Caco-2 (cell line): ENCODE measurements at regions of chr22 and their contacts with region 1.

Region 1: GRCh38 chr22:22877523-22878210 is 9.9 kb upstream of the IGLL5 start:
- DNase-seq: peak; percentile 57 to 77
- H3K4me3 ChIP-seq: no peak overlapping the region
- H3K4me3 Mint-ChIP-seq: no peak overlapping the region
- H3K27ac Mint-ChIP-seq: no peak overlapping the region
- H3K4me1 ChIP-seq: no peaks in the 10 kb centered on the region
- H3K4me1 Mint-ChIP-seq: no peaks in the 10 kb centered on the region
- H3K27me3 ChIP-seq: no peaks in the 10 kb centered on the region
- H3K27me3 Mint-ChIP-seq: no peaks in the 10 kb centered on the region
- CTCF ChIP-seq: peak; percentile 81 to 90

Region 2: DNA sequence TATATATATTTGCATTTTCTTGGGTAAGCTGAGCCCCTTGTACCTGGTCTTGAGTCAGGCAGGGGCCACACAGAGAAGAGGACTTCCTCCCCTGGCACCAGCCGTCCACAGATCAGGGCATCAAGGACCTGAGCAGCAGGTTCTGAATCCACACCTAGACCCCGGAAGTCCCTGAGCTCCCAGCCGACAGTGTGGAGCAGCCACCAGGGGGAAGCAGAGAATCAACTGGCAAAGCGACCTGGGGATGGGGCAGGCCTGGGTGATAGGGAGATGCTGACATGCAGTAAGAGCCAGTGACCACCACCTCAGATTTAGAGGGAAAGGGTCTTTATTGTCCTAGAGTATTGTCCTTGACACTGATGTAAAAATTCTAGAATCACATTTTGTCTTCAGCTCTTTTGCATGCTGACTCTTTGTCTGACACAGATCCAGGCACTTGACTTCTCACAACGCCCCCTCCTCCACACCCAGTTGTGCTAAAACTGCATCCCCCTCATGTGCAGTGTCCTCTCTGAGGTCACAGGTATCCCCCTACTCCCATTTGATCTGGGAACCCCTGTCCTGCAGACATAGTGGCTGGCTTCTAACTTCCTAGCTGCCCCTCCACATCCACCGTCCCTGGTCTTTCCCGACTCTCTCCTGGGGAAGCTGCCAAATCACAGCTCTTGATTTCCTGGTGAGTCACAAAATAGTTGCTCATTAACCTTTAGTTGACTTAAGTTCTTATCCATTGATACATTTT is 124.0 kb before region 1 on chr22:
- CTCF ChIA-PET with region 1: interaction called, 11 read pairs
- POLR2A ChIA-PET with region 1: no interaction called
- intact Hi-C with region 1: no loop called
- DNase-seq: peak; percentile 78 to 80
- H3K4me3 ChIP-seq: no peak overlapping the region
- H3K4me3 Mint-ChIP-seq: no peak overlapping the region
- H3K27ac Mint-ChIP-seq: no peak overlapping the region
- H3K4me1 ChIP-seq: no peaks in the 10 kb centered on the region
- H3K4me1 Mint-ChIP-seq: no peaks in the 10 kb centered on the region
- H3K27me3 ChIP-seq: no peaks in the 10 kb centered on the region; the same call in 1 of the 2 replicates
- H3K27me3 Mint-ChIP-seq: no peaks in the 10 kb centered on the region
- CTCF ChIP-seq: peak; percentile 59 to 91

Region 3: DNA sequence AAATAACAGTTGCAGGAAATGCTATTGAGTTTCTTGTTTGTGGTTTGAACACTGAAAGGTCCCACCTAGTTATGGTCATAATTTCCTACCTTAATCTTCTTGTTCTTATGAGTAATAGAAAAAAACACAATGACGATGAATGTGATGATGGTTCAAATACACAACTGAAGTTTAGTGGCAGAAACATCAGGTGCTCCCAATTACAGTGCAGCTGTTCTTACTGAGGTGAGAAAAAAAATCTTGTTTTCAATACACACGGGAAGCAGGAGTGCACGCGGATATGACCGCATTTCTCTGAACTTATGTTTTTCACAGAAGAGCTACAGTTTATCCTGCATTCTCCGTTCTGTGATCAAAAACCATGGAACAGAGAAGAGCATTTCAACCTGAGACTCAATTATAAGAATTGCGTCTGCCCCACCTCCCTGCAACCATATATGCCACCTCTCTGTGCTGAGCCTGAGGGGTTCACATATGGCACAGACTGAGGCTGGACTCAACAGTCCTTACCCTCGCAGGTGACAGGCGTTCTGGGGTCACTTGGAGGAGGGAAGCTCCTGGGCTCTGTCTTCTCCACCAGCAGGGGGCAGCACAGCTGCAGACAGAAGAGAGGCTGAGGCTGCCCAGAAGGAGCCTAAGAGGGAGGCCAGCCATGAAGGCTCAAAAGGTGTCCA is 89.7 kb before region 1 on chr22:
- CTCF ChIA-PET with region 1: interaction called, 6 read pairs
- POLR2A ChIA-PET with region 1: interaction called, 3 read pairs
- intact Hi-C with region 1: loop called (anchors 5 kb)
- DNase-seq: peak in 1 of 2 experiments; percentile 64
- H3K4me3 ChIP-seq: no peak overlapping the region
- H3K4me3 Mint-ChIP-seq: no peak overlapping the region
- H3K27ac Mint-ChIP-seq: no peak overlapping the region
- H3K4me1 ChIP-seq: peaks cover 51% of the 10 kb centered on the region
- H3K4me1 Mint-ChIP-seq: peaks cover 12% of the 10 kb centered on the region
- H3K27me3 ChIP-seq: no peaks in the 10 kb centered on the region
- H3K27me3 Mint-ChIP-seq: no peaks in the 10 kb centered on the region
- CTCF ChIP-seq: peak; percentile 64 to 84

Region 4: DNA sequence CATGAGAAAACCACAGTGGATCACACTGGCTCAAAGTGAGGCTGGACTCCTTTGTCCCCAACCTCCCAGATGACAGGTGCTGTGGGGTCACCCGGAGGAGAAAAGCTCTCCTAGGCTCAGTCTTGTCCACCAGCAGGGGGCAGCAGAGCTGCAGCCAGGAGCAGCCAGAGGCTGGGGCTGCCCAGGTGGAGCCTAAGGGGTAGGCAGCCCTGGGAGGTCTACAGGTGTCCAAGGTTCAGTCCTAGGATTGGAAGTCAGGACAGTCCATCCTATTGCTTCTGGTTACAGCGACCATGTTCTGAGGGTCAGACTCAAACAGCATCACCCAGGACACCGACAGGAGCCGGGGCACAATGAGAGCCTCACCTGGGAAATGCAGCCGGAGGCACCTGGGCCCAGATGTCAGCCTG is 67.6 kb before region 1 on chr22:
- CTCF ChIA-PET with region 1: interaction called, 13 read pairs
- POLR2A ChIA-PET with region 1: no interaction called
- intact Hi-C with region 1: loop called (anchors 2 kb)
- DNase-seq: peak; percentile 65 to 79
- H3K4me3 ChIP-seq: no peak overlapping the region
- H3K4me3 Mint-ChIP-seq: no peak overlapping the region
- H3K27ac Mint-ChIP-seq: no peak overlapping the region
- H3K4me1 ChIP-seq: no peaks in the 10 kb centered on the region
- H3K4me1 Mint-ChIP-seq: peaks cover 6% of the 10 kb centered on the region
- H3K27me3 ChIP-seq: no peaks in the 10 kb centered on the region
- H3K27me3 Mint-ChIP-seq: peaks cover 3% of the 10 kb centered on the region
- CTCF ChIP-seq: peak; percentile 83 to 88

Region 5: GRCh38 chr22:22863001-22863400 is 14.7 kb before region 1 on chr22:
- CTCF ChIA-PET with region 1: no interaction called
- POLR2A ChIA-PET with region 1: no interaction called
- intact Hi-C with region 1: no loop called
- DNase-seq: no peak
- H3K4me3 ChIP-seq: no peak overlapping the region
- H3K4me3 Mint-ChIP-seq: no peak overlapping the region
- H3K27ac Mint-ChIP-seq: no peak overlapping the region
- H3K4me1 ChIP-seq: no peaks in the 10 kb centered on the region; the same call in 1 of the 2 replicates
- H3K4me1 Mint-ChIP-seq: peaks cover 7% of the 10 kb centered on the region
- H3K27me3 ChIP-seq: no peaks in the 10 kb centered on the region
- H3K27me3 Mint-ChIP-seq: peaks cover 8% of the 10 kb centered on the region
- CTCF ChIP-seq: no peak